Endothelial cell of umbilical vein (primary cell): ENCODE measurements at regions of chr2 and their contacts with region 1.

Region 1: DNA sequence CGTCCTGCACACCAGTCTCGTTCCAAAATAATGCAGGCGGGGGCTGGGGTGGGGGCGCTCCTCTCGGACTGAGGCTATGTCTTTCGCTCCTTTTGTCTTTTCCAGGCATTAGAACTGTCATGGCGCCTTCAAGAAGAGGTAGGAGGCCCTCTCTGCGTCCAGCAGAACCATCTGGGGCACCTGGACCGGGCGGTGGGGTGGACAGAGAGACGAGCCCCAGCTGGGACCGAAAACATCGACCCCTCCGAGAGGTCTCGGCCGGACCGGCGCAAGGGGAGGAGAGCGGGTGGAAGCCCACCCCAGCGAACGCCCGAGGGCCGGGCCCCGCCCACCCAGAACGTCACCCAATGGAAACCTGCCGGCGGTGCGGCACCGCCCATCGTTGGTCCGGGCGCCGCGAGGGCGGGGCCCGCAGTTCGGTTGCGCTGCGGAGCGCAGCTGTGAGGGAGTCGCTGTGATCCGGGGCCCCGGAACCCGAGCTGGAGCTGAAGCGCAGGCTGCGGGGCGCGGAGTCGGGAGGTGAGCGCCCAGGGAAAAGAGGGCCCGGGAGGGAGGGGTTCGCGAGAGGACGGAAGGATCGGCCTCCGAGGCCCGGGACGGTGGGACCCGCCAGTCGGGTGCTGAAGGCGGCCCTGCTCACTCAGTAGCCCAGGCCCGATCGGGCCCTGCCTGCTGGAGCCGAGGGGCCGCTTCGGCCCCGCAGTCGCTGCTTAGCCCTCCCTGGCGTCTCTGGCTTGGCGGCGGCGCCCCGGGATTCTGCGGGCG is at the start of gene NRBP1:
- DNase-seq: peak; percentile 89
- H3K4me3 ChIP-seq: peak within 1 kb of the TSS; percentile 68 to 93 (median 86)
- H3K27ac ChIP-seq: peak within 1 kb of the TSS; percentile 86
- H3K4me1 ChIP-seq: peaks cover 26% of the 10 kb centered on the region
- H3K27me3 ChIP-seq: no peaks in the 10 kb centered on the region
- CTCF ChIP-seq: no peak
- POLR2A ChIP-seq: peak; percentile 84
- total RNA-seq, gene NRBP1: 118 and 130 TPM in 2 replicates

Region 2: GRCh38 chr2:27356382-27357181 is 71.8 kb before region 1 on chr2 and contains the start of gene GTF3C2:
- CTCF ChIA-PET with region 1: no interaction called
- POLR2A ChIA-PET with region 1: interaction called, 8 read pairs
- dilution Hi-C with region 1: no loop called
- intact Hi-C with region 1: loop called (anchors 2 kb)
- DNase-seq: peak; percentile 98
- H3K4me3 ChIP-seq: peak within 1 kb of the TSS; percentile 40 to 90 (median 63)
- H3K27ac ChIP-seq: peak within 1 kb of the TSS; percentile 83
- H3K4me1 ChIP-seq: peaks cover 16% of the 10 kb centered on the region
- H3K27me3 ChIP-seq: no peaks in the 10 kb centered on the region
- CTCF ChIP-seq: no peak
- POLR2A ChIP-seq: no peak
- total RNA-seq, gene GTF3C2: 57.4 and 63.2 TPM in 2 replicates

Region 3: GRCh38 chr2:27409321-27410073 is 18.9 kb before region 1 on chr2 and contains the start of gene PPM1G:
- CTCF ChIA-PET with region 1: interaction called, 75 read pairs
- POLR2A ChIA-PET with region 1: interaction called, 18 read pairs
- dilution Hi-C with region 1: no loop called
- intact Hi-C with region 1: loop called (anchors 1 kb)
- DNase-seq: peak; percentile 97
- H3K4me3 ChIP-seq: peak within 1 kb of the TSS; percentile 71 to 90 (median 84)
- H3K27ac ChIP-seq: peak within 1 kb of the TSS; percentile 73
- H3K4me1 ChIP-seq: peaks cover 20% of the 10 kb centered on the region
- H3K27me3 ChIP-seq: peaks cover 1 to 5% of the 10 kb centered on the region in 2 experiments
- CTCF ChIP-seq: no peak
- POLR2A ChIP-seq: peak; percentile 98
- total RNA-seq, gene PPM1G: 131 and 135 TPM in 2 replicates

Region 4: GRCh38 chr2:27489498-27490397 is 61.4 kb after region 1 on chr2 and contains the start of gene IFT172:
- CTCF ChIA-PET with region 1: no interaction called
- POLR2A ChIA-PET with region 1: no interaction called
- dilution Hi-C with region 1: no loop called
- intact Hi-C with region 1: loop called (anchors 2 kb)
- DNase-seq: peak; percentile 99
- H3K4me3 ChIP-seq: peak within 1 kb of the TSS; percentile 9 to 66 (median 56)
- H3K27ac ChIP-seq: peak within 1 kb of the TSS; percentile 0
- H3K4me1 ChIP-seq: peaks cover 15% of the 10 kb centered on the region
- H3K27me3 ChIP-seq: no peaks in the 10 kb centered on the region
- CTCF ChIP-seq: no peak
- POLR2A ChIP-seq: peak; percentile 83
- total RNA-seq, gene IFT172: 34.1 and 35.6 TPM in 2 replicates

Region 5: GRCh38 chr2:27628767-27629709 is 200.6 kb after region 1 on chr2 and contains the starts of genes CCDC121 and GPN1:
- CTCF ChIA-PET with region 1: no interaction called
- POLR2A ChIA-PET with region 1: no interaction called
- dilution Hi-C with region 1: no loop called
- intact Hi-C with region 1: loop called (anchors 1 kb)
- DNase-seq: peak; percentile 93
- H3K4me3 ChIP-seq: peak within 1 kb of the TSS; percentile 98
- H3K27ac ChIP-seq: peak within 1 kb of the TSS; percentile 69
- H3K4me1 ChIP-seq: peaks cover 27% of the 10 kb centered on the region
- H3K27me3 ChIP-seq: no peaks in the 10 kb centered on the region
- CTCF ChIP-seq: no peak
- POLR2A ChIP-seq: peak; percentile 96
- total RNA-seq, gene CCDC121: 1.7 and 3.3 TPM in 2 replicates
- total RNA-seq, gene GPN1: 41.5 and 45.5 TPM in 2 replicates